ENCODE measurements at regions of chr1 and their contacts with region 1.

Region 1: GRCh38 chr1:11641776-11642305 is 12.4 kb downstream of the FBXO2 start:
- DNase-seq: no peak
- H3K4me3 ChIP-seq: no peak overlapping the region
- CTCF ChIP-seq: no peak
- POLR2A ChIP-seq: no peak

Region 2: GRCh38 chr1:11248155-11248554 is 393.7 kb before region 1 on chr1:
- intact Hi-C with region 1: loop called (anchors 2 kb)
- DNase-seq: no peak
- H3K4me3 ChIP-seq: no peak overlapping the region
- CTCF ChIP-seq: no peak
- POLR2A ChIP-seq: no peak

Region 3: GRCh38 chr1:11681071-11681771 is 39.4 kb after region 1 on chr1 and contains the start of gene MAD2L2:
- intact Hi-C with region 1: no loop called
- DNase-seq: peak; percentile 73 to 98
- H3K4me3 ChIP-seq: peak within 1 kb of the TSS; percentile 68
- CTCF ChIP-seq: no peak
- POLR2A ChIP-seq: no peak
- total RNA-seq, gene MAD2L2: 22.7 to 40.0 (median 32.5) TPM

Region 4: DNA sequence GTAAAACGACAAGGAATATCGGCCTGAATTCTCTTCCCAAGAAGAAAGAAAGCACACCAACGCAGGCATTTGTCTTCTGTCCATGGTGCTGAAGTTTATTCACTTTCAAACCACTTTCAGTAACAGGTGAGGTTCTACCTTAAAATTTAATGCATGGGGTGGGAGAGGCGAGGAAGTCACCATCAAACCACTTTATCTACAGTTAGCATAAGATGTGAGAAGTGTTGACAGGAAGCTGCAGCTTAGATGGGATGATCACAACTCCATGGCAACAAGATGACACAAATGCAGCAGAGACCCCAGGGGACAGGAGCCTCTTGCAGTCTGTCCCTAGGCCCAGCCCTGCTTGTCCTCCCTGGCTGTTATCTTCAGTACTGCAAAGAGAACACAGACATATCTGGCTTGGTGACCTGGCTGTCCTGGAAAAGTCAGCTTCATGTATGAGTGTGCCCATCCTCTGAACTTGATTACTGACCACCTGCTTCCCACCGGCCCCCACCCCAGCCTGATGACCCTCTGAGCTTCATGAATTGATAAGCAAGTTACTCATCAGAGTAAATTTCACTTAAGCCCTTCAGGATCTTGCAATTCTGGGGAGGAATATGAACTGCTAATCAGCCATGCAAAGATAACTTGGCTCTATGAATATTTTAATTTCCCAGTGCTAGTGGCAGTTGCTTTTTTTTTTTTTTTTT is 203.9 kb after region 1 on chr1:
- intact Hi-C with region 1: no loop called
- DNase-seq: no peak
- H3K4me3 ChIP-seq: no peak overlapping the region
- CTCF ChIP-seq: no peak
- POLR2A ChIP-seq: no peak

Region 5: DNA sequence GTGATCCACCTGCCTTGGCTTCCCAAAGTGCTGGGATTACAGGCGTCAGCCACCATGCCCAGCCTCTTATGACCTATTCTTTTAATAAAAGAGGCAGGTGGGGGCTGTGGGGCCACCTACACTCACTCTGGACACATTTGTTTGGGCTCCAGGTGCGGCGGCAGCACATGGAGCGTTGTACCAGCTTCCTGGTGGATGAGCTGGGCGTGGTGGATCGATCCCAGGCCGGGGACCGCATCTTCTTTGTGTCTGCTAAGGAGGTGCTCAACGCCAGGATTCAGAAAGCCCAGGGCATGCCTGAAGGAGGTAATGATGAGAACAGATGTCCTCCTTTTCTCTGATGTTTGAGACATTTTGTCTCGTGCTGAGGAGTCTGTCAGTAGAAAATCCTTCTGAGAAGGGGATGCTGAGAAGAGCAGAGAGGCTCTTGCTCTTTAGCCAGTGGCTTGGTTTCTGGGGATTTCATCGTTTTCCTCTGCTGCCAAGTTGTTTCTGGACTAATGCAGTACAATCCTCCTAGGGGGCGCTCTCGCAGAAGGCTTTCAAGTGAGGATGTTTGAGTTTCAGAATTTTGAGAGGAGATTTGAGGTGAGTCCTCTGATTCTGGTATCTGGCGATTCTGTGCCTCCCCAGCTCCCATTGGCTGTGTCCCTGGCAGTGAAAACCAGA is 359.5 kb after region 1 on chr1:
- intact Hi-C with region 1: no loop called
- DNase-seq: no peak
- H3K4me3 ChIP-seq: no peak overlapping the region
- CTCF ChIP-seq: no peak
- POLR2A ChIP-seq: no peak

Measured in lower leg skin (tissue), 4 donors.